ENCODE measurements at regions of chr22 and their contacts with region 1.

Region 1: DNA sequence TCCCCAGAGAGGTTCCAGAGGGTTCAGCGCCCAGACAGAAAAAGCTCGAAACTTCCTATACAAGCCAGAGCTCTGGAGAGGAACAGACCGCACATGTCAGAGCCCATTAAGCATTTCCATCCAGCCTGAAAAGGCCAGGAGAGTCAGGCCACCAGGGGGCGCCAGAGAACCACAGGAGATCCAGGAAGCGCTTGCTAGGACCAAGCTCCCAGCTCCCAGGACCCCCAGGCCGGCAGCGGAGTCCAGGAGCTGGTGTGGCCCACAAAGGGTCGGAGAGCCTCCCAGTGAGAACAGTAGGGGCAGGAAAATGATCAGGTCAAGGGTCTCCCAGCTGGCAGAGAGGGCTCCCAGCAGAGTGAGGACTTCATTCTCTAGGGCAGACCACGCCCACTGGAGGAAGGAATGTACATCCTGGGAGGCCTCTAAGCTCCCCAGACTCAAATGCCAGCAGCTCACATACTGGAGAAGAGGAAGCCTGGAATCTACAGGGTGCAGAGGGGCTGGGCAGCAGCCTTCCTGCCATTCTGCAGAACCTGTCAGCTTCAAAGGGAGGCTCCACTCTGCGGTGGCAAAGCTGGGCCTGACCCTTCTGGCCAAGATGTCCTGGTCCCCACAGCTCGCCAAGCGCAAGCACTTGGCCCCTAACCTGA is 2.1 kb upstream of the MEI1 start:
- DNase-seq: peak; percentile 90 to 100
- H3K4me3 ChIP-seq: peak overlapping the region in 1 of 4 experiments; percentile 28; a peak in 1 of 8 replicates
- H3K27ac ChIP-seq: no peak overlapping the region
- H3K4me1 ChIP-seq: peaks cover 0 to 6% (median 4%) of the 10 kb centered on the region in 4 experiments; a peak in 5 of 7 replicates
- H3K27me3 ChIP-seq: peaks cover 0 to 10% (median 6%) of the 10 kb centered on the region in 4 experiments; a peak in 6 of 7 replicates
- CTCF ChIP-seq: peak; percentile 90
- EP300 ChIP-seq: no peak
- POLR2A ChIP-seq: no peak
- RAD21 ChIP-seq: peak; percentile 89 to 92

Region 2: GRCh38 chr22:41682033-41682807 is 15.0 kb before region 1 on chr22:
- CTCF ChIA-PET with region 1: interaction called, 36 read pairs
- POLR2A ChIA-PET with region 1: interaction called, 3 read pairs
- DNase-seq: peak in 1 of 2 experiments; percentile 92
- H3K4me3 ChIP-seq: peak overlapping the region; percentile 65 to 88 (median 75)
- H3K27ac ChIP-seq: peak overlapping the region; percentile 73
- H3K4me1 ChIP-seq: no peaks in the 10 kb centered on the region; a peak in 1 of 7 replicates
- H3K27me3 ChIP-seq: no peaks in the 10 kb centered on the region
- CTCF ChIP-seq: no peak
- EP300 ChIP-seq: no peak
- POLR2A ChIP-seq: peak in 1 of 2 experiments; percentile 67; a peak in 2 of 3 replicates
- RAD21 ChIP-seq: no peak

Region 3: GRCh38 chr22:41746567-41747400 is 49.5 kb after region 1 on chr22:
- CTCF ChIA-PET with region 1: interaction called, 28 read pairs
- POLR2A ChIA-PET with region 1: no interaction called
- DNase-seq: peak; percentile 46 to 77
- H3K4me3 ChIP-seq: no peak overlapping the region
- H3K27ac ChIP-seq: no peak overlapping the region
- H3K4me1 ChIP-seq: no peaks in the 10 kb centered on the region
- H3K27me3 ChIP-seq: no peaks in the 10 kb centered on the region; a peak in 1 of 7 replicates
- CTCF ChIP-seq: peak; percentile 83 to 93 (median 85)
- EP300 ChIP-seq: no peak
- POLR2A ChIP-seq: no peak
- RAD21 ChIP-seq: peak; percentile 79 to 84

Region 4: GRCh38 chr22:41780746-41781505 is 83.7 kb after region 1 on chr22:
- CTCF ChIA-PET with region 1: interaction called, 16 read pairs
- POLR2A ChIA-PET with region 1: no interaction called
- DNase-seq: no peak
- H3K4me3 ChIP-seq: no peak overlapping the region
- H3K27ac ChIP-seq: no peak overlapping the region
- H3K4me1 ChIP-seq: no peaks in the 10 kb centered on the region; a peak in 1 of 7 replicates
- H3K27me3 ChIP-seq: no peaks in the 10 kb centered on the region; a peak in 2 of 7 replicates
- CTCF ChIP-seq: no peak
- EP300 ChIP-seq: no peak
- POLR2A ChIP-seq: no peak
- RAD21 ChIP-seq: no peak

Region 5: DNA sequence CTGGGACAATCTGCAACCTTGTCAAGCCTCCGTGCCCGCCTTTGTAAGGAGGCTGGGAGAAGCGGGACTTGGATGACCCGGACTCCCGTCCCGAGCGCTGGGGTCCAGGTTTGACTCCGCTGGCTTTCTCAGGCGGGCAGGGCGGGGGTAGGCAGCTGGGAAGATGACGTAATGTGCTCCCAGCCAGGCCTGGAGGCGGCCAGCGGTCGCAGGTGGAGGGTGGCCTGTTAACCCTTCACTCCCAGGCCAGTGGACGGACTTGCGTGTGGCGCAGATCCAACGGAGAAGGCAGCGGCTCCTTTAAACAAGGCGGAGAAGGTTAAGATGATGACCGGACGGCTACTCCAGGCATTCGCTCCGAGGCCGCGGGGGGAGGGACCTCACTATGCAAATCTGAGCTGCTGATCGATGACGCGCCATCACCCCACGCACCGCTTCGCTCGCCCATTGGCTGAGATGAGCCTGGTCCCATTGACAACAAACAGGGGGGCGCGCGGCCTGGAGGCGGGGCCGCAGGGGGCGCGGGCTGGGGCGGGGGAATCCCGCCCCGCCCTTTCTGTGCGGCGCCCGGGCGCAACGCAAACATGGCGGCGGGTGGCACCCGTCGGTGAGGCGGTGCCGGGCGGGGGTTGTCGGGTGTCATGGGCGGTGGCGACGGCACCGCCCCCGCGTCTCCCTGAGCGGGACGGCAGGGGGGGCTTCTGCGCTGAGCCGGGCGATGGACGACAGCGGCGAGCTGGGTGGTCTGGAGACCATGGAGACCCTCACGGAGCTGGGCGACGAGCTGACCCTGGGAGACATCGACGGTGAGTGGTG is 135.5 kb after region 1 on chr22 and contains the start of gene SREBF2:
- CTCF ChIA-PET with region 1: interaction called, 16 read pairs
- POLR2A ChIA-PET with region 1: no interaction called
- DNase-seq: peak; percentile 97 to 100
- H3K4me3 ChIP-seq: peak within 1 kb of the TSS; percentile 76 to 87 (median 85)
- H3K27ac ChIP-seq: peak within 1 kb of the TSS; percentile 91
- H3K4me1 ChIP-seq: peaks cover 0 to 5% (median 1%) of the 10 kb centered on the region in 4 experiments; a peak in 3 of 7 replicates
- H3K27me3 ChIP-seq: no peaks in the 10 kb centered on the region
- CTCF ChIP-seq: no peak
- EP300 ChIP-seq: peak in 1 of 2 experiments; percentile 83; a peak in 1 of 3 replicates
- POLR2A ChIP-seq: peak; percentile 78 to 85
- RAD21 ChIP-seq: no peak
- total RNA-seq, gene SREBF2: 144 TPM in 2 replicates

Region 6: DNA sequence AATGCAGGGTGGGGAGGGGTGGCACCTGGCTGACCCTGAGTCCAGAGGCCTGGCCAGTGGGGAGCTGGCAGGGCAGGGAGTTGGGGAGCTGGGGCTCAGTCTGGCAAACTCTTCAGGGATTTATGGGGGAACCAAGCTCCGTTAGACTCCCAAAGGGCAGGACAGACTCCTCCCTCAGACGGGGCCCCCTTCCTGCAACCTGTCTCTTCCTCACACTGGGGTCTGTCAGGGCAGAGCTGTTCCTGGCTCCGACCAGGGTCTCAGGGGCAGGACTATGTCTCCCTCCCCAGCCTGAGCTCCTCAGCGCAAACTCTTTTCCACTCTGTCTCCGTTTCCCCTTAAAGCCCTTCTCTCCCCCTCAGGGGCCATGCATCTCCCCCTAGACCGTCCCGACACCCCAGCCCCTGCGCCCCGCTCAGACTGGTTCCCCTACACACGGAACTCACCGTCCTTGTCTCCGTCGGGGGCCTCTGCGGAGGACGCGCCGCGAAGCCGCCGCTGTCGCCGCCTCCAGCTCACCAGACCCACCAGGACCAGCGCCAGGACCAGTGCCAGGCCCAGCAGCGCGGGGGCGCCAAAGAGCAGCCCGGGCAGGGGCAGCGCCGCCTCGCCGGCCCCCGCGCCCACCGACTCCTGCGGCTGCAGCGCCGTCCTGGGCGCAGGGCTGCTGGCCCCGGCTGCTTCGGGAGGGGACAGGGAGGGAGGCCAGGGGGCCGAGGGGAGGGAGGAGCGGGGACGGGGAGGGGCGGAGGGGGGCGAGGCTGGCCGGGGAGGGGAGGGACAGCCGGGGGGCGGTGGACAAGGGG is 228.6 kb after region 1 on chr22:
- CTCF ChIA-PET with region 1: interaction called, 22 read pairs
- POLR2A ChIA-PET with region 1: no interaction called
- DNase-seq: peak in 1 of 2 experiments; percentile 95
- H3K4me3 ChIP-seq: peak overlapping the region; percentile 23 to 71 (median 31); a peak in 6 of 8 replicates
- H3K27ac ChIP-seq: no peak overlapping the region
- H3K4me1 ChIP-seq: peaks cover 0 to 24% (median 15%) of the 10 kb centered on the region in 4 experiments; a peak in 6 of 7 replicates
- H3K27me3 ChIP-seq: peaks cover 13 to 63% (median 46%) of the 10 kb centered on the region in 4 experiments
- CTCF ChIP-seq: peak; percentile 90 to 93 (median 91)
- EP300 ChIP-seq: no peak
- POLR2A ChIP-seq: 0 out of 3 replicates have a peak, but pooled peaks of 1 of the 2 experiments have one; percentile 22
- RAD21 ChIP-seq: peak; percentile 38 to 64